ENCODE measurements at regions of chr15 and their contacts with region 1.

Region 1: DNA sequence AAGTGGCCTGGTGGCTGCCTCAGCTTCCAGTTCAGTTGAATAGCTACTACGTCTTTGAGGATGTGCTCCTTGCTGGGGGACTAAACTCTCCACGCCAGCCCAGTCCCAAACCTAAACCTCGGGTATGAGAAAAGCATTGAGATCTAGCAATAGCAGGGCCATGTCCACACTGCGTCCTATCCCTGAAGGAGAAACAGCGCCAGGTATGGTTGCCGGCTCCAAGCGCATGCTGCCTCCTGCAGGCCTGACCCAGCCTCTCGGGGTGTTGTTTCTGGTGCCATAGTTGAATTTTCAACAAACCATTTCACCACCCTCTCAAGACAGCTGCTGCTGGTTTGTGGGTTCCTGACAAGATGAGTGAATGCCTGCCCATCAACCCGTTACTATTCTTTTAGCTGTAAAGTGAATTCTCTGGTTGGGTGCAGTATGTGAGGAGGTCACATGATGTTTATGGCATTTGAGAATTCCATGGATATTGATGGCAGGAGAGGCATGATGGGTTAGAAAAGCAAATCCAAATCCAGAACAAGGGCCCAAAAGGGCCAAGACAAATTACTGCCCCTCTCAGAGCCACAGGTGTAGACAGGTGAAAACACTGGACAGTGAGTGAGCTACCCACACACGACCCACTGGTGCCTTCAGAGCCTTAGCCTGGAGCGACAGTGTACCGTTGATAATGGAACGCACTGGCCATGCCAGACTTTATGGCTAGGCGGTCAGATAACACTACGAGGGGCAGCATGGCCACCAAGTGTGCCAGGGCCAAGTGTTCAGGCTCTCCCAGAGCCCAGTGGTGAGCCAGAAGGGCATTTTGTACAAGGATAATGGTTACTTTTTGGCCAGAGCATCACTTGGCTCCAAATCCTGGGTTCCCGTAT is 12.8 kb upstream of the SLC28A1 start:
- DNase-seq: no peak
- H3K4me3 ChIP-seq: no peak overlapping the region
- H3K27ac ChIP-seq: no peak overlapping the region
- H3K4me1 ChIP-seq: no peaks in the 10 kb centered on the region
- H3K27me3 ChIP-seq: no peaks in the 10 kb centered on the region
- CTCF ChIP-seq: no peak
- EP300 ChIP-seq: no peak
- POLR2A ChIP-seq: no peak

Region 2: GRCh38 chr15:84598969-84599368 is 272.7 kb before region 1 on chr15:
- in situ Hi-C with region 1: loop called in 1 of 4 experiments (anchors 10 kb)
- intact Hi-C with region 1: no loop called
- DNase-seq: peak; percentile 40
- H3K4me3 ChIP-seq: no peak overlapping the region
- H3K27ac ChIP-seq: peak overlapping the region in 3 of 4 donors; percentile 19 to 71 (median 41)
- H3K4me1 ChIP-seq: peaks cover 0 to 20% (median 4%) of the 10 kb centered on the region in 4 donors
- H3K27me3 ChIP-seq: no peaks in the 10 kb centered on the region
- CTCF ChIP-seq: peak; percentile 51 to 67 (median 64)
- EP300 ChIP-seq: no peak
- POLR2A ChIP-seq: no peak

Measured in transverse colon (tissue), 4 donors.